RWPE1 (cell line): ENCODE measurements at regions of chr22 and their contacts with region 1.

Region 1: GRCh38 chr22:17742527-17742902 is 31.8 kb downstream of the BID start:
- DNase-seq: peak; percentile 64
- H3K27ac ChIP-seq: no peak overlapping the region
- CTCF ChIP-seq: peak; percentile 76

Region 2: GRCh38 chr22:17628304-17629166 is 114.0 kb before region 1 on chr22 and contains the start of gene ATP6V1E1:
- CTCF ChIA-PET with region 1: no interaction called
- POLR2A ChIA-PET with region 1: no interaction called
- DNase-seq: peak; percentile 96
- H3K27ac ChIP-seq: peak within 1 kb of the TSS; percentile 92
- CTCF ChIP-seq: no peak

Region 3: DNA sequence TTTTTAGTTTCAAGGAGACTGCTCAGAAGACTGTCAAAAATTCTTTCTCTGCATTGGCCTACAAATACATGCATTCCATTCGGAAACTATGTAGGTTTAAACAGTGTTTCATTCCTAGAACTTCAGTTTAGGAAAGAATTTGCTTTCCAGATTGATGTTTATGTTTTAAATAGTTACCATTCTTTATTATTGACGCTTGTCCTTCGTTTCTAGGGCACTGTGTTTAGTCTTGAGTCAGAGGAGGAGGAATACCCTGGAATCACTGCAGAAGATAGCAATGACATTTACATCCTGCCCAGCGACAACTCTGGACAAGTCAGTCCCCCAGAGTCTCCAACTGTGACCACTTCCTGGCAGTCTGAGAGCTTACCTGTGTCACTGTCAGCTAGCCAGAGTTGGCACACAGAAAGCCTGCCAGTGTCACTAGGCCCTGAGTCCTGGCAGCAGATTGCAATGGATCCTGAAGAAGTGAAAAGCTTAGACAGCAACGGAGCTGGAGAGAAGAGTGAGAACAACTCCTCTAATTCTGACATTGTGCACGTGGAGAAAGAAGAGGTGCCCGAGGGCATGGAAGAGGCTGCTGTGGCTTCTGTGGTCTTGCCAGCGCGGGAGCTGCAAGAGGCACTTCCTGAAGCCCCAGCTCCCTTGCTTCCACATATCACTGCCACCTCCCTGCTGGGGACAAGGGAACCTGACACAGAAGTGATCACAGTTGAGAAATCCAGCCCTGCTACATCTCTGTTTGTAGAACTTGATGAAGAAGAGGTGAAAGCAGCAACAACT is 15.9 kb before region 1 on chr22:
- CTCF ChIA-PET with region 1: no interaction called
- POLR2A ChIA-PET with region 1: no interaction called
- DNase-seq: no peak
- H3K27ac ChIP-seq: peak overlapping the region; percentile 19; the same call in 1 of the 2 replicates
- CTCF ChIP-seq: no peak

Region 4: GRCh38 chr22:17785185-17786184 is 43.0 kb after region 1 on chr22:
- CTCF ChIA-PET with region 1: interaction called, 13 read pairs
- POLR2A ChIA-PET with region 1: no interaction called
- DNase-seq: no peak
- H3K27ac ChIP-seq: peak overlapping the region; percentile 77
- CTCF ChIP-seq: peak; percentile 38